ENCODE measurements at regions of chr17 and their contacts with region 1.

Region 1: DNA sequence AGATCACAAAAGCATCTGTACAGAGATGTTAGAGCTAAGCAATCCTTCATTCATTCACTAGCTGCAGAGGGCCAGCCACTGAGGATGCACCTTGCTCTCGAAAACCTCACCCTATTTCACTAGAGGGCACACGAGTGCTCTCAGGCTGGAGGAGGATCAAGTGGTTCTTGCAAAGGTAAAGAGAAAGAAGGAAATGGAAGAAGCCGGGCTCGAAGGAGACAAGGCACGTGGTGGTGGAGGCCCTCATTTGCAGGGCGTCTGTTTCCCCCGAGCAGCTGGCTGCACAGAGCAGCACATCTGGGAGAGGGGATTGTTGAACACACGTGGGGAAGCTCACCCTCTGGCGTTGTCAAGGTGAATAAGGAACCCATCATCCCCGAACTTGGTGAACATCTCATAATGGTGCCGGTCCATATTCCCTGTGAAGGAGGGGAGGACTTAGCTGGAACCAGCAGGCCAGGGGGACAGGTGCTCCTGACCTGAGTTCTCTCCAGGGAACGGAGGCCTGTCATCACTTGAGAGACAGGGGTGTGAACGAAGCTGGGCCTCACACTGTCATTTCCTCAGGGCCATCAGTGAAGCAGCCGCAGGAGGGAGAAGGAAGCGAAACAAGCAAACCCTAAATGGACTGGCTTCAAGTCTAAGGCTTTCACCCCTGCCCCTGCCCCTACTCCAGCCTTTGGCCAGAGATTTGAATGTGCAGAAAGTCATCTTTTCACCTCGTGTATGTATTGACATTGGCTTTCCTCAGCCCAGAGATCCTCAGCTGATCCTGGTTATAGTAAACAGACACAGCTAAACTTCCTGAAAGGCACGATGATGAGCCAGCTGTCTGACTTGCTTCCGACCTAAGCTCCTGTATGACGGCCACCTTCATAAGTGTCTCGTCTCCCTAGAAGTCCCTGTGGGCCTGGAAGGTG is 27.6 kb downstream of the PRKAR1A start:
- DNase-seq: peak; percentile 55 to 67
- H3K4me3 ChIP-seq: no peak overlapping the region
- H3K27ac ChIP-seq: peak overlapping the region in 4 of 5 donors; percentile 7 to 53 (median 36)
- H3K4me1 ChIP-seq: peaks cover 0 to 32% (median 10%) of the 10 kb centered on the region in 4 donors
- H3K27me3 ChIP-seq: no peaks in the 10 kb centered on the region
- CTCF ChIP-seq: peak in 4 of 7 experiments; percentile 21 to 45 (median 22)
- EP300 ChIP-seq: no peak
- POLR2A ChIP-seq: no peak

Region 2: GRCh38 chr17:68122587-68122986 is 417.2 kb before region 1 on chr17:
- intact Hi-C with region 1: no loop called
- DNase-seq: no peak
- H3K4me3 ChIP-seq: no peak overlapping the region
- H3K27ac ChIP-seq: no peak overlapping the region
- H3K4me1 ChIP-seq: peaks cover 0 to 11% (median 0%) of the 10 kb centered on the region in 4 donors
- H3K27me3 ChIP-seq: no peaks in the 10 kb centered on the region
- CTCF ChIP-seq: no peak
- EP300 ChIP-seq: no peak
- POLR2A ChIP-seq: no peak

Region 3: DNA sequence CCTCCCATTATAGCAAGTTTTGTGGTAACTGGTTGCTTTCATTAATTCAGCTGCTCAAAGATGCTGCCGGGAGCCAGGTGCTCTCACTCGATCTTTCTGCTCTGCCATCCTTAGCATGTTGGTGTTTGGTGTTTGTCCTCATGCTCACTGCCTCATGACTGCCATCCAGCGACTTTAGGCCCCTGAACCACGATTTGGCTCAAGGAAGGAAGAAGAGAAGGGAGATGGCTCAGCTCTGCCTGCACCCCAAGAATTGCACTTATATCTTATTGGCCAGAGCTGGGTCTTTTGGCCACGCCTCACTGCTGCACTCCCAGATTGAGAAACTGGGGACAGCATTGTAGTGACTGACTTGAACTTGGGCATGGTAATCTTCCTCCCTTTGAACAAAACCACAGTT is 195.8 kb before region 1 on chr17:
- intact Hi-C with region 1: no loop called
- DNase-seq: no peak
- H3K4me3 ChIP-seq: no peak overlapping the region
- H3K27ac ChIP-seq: peak overlapping the region in 1 of 5 donors; percentile 10
- H3K4me1 ChIP-seq: peaks cover 0 to 13% (median 2%) of the 10 kb centered on the region in 4 donors
- H3K27me3 ChIP-seq: no peaks in the 10 kb centered on the region
- CTCF ChIP-seq: no peak
- EP300 ChIP-seq: no peak
- POLR2A ChIP-seq: no peak

Region 4: GRCh38 chr17:68759343-68760132 is 219.7 kb after region 1 on chr17:
- intact Hi-C with region 1: loop called (anchors 10 kb)
- DNase-seq: peak; percentile 90 to 96
- H3K4me3 ChIP-seq: peak overlapping the region; percentile 24 to 37 (median 30)
- H3K27ac ChIP-seq: peak overlapping the region; percentile 74 to 89 (median 81)
- H3K4me1 ChIP-seq: peaks cover 0 to 16% (median 12%) of the 10 kb centered on the region in 4 donors
- H3K27me3 ChIP-seq: no peaks in the 10 kb centered on the region
- CTCF ChIP-seq: peak in 5 of 7 experiments; percentile 70 to 96 (median 84)
- EP300 ChIP-seq: no peak
- POLR2A ChIP-seq: no peak

Region 5: GRCh38 chr17:68892658-68893057 is 352.9 kb after region 1 on chr17:
- intact Hi-C with region 1: no loop called
- DNase-seq: no peak
- H3K4me3 ChIP-seq: no peak overlapping the region
- H3K27ac ChIP-seq: no peak overlapping the region
- H3K4me1 ChIP-seq: no peaks in the 10 kb centered on the region
- H3K27me3 ChIP-seq: no peaks in the 10 kb centered on the region
- CTCF ChIP-seq: no peak
- EP300 ChIP-seq: no peak
- POLR2A ChIP-seq: no peak

Measured in stomach (tissue), 19 donors.